Body of pancreas (tissue), 4 donors: ENCODE measurements at regions of chr16 and their contacts with region 1.

Region 1: GRCh38 chr16:88619859-88620815 is 18.2 kb upstream of the IL17C start:
- DNase-seq: peak in 1 of 4 donors; percentile 38
- ATAC-seq: no peak
- H3K4me3 ChIP-seq: no peak overlapping the region
- H3K27ac ChIP-seq: no peak overlapping the region
- H3K4me1 ChIP-seq: peaks cover 42% of the 10 kb centered on the region
- H3K27me3 ChIP-seq: no peaks in the 10 kb centered on the region
- CTCF ChIP-seq: no peak
- POLR2A ChIP-seq: no peak

Region 2: GRCh38 chr16:88387941-88388627 is 232.1 kb before region 1 on chr16:
- intact Hi-C with region 1: no loop called
- DNase-seq: peak; percentile 66 to 85 (median 76)
- ATAC-seq: peak; percentile 88
- H3K4me3 ChIP-seq: no peak overlapping the region
- H3K27ac ChIP-seq: peak overlapping the region; percentile 63 to 91 (median 88)
- H3K4me1 ChIP-seq: peaks cover 29% of the 10 kb centered on the region
- H3K27me3 ChIP-seq: peaks cover 0 to 5% of the 10 kb centered on the region in 2 donors
- CTCF ChIP-seq: peak in 3 of 7 experiments; percentile 15 to 27 (median 24)
- POLR2A ChIP-seq: peak in 2 of 3 donors; percentile 55 to 72

Region 3: DNA sequence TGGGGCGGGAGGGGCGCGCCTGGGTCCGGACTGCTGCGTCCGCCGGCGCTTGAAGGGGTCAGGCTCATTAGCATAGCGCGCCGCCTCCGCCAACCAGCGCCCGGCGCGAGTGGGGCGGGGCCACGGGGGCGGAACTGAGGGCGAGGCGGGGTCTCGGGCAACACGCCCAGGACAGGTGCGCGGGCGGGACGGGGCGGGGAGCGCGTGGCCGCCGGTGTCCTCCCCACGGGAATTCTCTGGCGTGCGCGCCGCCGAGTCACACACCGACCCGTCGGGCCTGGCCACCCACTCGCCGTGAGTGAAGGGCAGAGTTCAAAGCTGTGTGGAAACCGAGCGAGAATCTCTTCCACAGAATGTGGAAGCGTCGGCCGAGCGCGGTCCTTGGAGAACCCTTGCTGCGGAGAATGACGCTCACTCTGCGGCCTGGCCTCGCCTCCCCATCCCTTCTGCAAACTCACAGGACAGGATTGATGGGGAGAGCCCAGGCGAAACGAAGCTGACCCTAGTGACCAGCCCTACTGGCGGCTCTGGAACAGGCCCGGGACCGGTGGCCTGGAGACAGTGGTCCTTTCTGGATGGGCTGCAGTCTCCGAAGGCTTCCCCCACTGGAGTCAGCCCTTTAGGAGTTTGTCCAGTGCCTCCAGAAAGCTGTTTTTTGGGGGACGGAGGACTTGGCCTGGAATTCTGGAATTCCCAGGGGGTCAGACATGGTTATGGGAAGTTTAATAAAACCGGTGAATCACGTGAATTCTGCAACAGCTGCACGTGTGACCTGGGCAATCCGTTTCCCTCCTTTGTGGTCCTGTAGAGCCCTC is 66.5 kb after region 1 on chr16 and contains the start of gene SNAI3:
- intact Hi-C with region 1: loop called (anchors 10 kb)
- DNase-seq: peak; percentile 85 to 94 (median 88)
- ATAC-seq: peak; percentile 84
- H3K4me3 ChIP-seq: peak within 1 kb of the TSS; percentile 67 to 74
- H3K27ac ChIP-seq: peak within 1 kb of the TSS; percentile 25 to 80 (median 59)
- H3K4me1 ChIP-seq: peaks cover 40% of the 10 kb centered on the region
- H3K27me3 ChIP-seq: no peaks in the 10 kb centered on the region
- CTCF ChIP-seq: no peak
- POLR2A ChIP-seq: peak in 2 of 3 donors; percentile 19 to 25
- total RNA-seq, gene SNAI3: 0.26 TPM in 1 of 2 donors, not detected in the other